Ascending aorta (tissue), 2 donors: ENCODE measurements at regions of chr5 and their contacts with region 1.

Region 1: GRCh38 chr5:155943516-155944407 is 383.2 kb upstream of the SGCD start:
- DNase-seq: no peak
- H3K4me3 ChIP-seq: no peak overlapping the region
- H3K27ac ChIP-seq: no peak overlapping the region
- H3K4me1 ChIP-seq: no peaks in the 10 kb centered on the region
- H3K27me3 ChIP-seq: no peaks in the 10 kb centered on the region
- CTCF ChIP-seq: peak; percentile 48 to 86 (median 65)

Region 2: GRCh38 chr5:156036640-156037039 is 92.9 kb after region 1 on chr5:
- intact Hi-C with region 1: no loop called
- DNase-seq: no peak
- H3K4me3 ChIP-seq: no peak overlapping the region
- H3K27ac ChIP-seq: peak overlapping the region; percentile 81 to 87
- H3K4me1 ChIP-seq: peaks cover 0 to 3% of the 10 kb centered on the region in 2 donors
- H3K27me3 ChIP-seq: no peaks in the 10 kb centered on the region
- CTCF ChIP-seq: no peak

Region 3: DNA sequence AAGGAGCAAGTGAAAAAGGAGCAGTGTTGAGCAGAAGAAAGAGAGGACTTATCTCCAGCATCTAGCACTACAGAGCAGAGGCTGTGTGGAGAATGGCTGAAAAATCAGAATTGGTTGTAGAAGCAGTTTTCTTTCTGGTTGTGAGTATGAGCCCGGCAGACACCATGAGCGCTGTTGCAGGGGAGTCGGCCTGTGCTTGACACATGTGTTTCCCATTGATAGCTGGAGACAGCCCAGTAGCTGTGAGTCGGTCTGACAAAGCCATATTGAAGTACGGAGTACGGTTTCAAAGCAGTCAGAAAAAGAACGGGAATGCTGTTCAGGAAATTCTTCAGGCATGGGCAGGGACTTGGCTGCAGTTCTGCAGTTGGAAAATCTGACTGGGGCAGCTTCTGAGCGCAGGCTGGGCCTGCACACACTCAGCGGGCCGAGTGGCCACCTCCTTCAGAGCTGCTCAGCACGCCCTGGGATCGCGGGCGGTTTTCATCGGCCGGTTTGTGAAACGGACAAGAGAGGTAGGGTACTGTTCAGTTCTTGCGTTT is 383.0 kb after region 1 on chr5 and contains the start of gene SGCD:
- intact Hi-C with region 1: loop called (anchors 10 kb)
- DNase-seq: peak; percentile 23 to 89
- H3K4me3 ChIP-seq: peak within 1 kb of the TSS; percentile 48 to 80
- H3K27ac ChIP-seq: peak within 1 kb of the TSS; percentile 81 to 86
- H3K4me1 ChIP-seq: peaks cover 0 to 14% of the 10 kb centered on the region in 2 donors
- H3K27me3 ChIP-seq: no peaks in the 10 kb centered on the region
- CTCF ChIP-seq: no peak
- total RNA-seq, gene SGCD: 4.0 TPM